Dorsolateral prefrontal cortex (tissue), 120 donors: ENCODE measurements at regions of chr11 and their contacts with region 1.

Region 1: GRCh38 chr11:113896156-113896879 is 8.3 kb upstream of the HTR3B start:
- DNase-seq: peak in 7 of 10 donors; percentile 36 to 67 (median 45)
- H3K4me3 ChIP-seq: no peak overlapping the region
- H3K27ac ChIP-seq: peak overlapping the region in 28 of 59 donors; percentile 3 to 75 (median 46)
- H3K27me3 ChIP-seq: no peaks in the 10 kb centered on the region
- CTCF ChIP-seq: peak; percentile 59 to 90 (median 80)

Region 2: GRCh38 chr11:113234888-113235287 is 661.4 kb before region 1 on chr11:
- intact Hi-C with region 1: no loop called
- DNase-seq: peak in 9 of 10 donors; percentile 45 to 75 (median 61)
- H3K4me3 ChIP-seq: no peak overlapping the region
- H3K27ac ChIP-seq: peak overlapping the region in 58 of 59 donors; percentile 16 to 93 (median 82)
- H3K27me3 ChIP-seq: no peaks in the 10 kb centered on the region
- CTCF ChIP-seq: peak in 1 of 56 donors; percentile 34

Region 3: GRCh38 chr11:113875234-113876073 is 20.9 kb before region 1 on chr11 and contains the start of gene USP28:
- intact Hi-C with region 1: no loop called
- DNase-seq: peak; percentile 96 to 99 (median 98)
- H3K4me3 ChIP-seq: peak within 1 kb of the TSS; percentile 43 to 97 (median 84)
- H3K27ac ChIP-seq: peak within 1 kb of the TSS; percentile 86 to 100 (median 96)
- H3K27me3 ChIP-seq: no peaks in the 10 kb centered on the region
- CTCF ChIP-seq: peak in 22 of 56 donors; percentile 3 to 44 (median 16)
- total RNA-seq, gene USP28: 20.2 to 57.1 (median 38.9) TPM

Region 4: DNA sequence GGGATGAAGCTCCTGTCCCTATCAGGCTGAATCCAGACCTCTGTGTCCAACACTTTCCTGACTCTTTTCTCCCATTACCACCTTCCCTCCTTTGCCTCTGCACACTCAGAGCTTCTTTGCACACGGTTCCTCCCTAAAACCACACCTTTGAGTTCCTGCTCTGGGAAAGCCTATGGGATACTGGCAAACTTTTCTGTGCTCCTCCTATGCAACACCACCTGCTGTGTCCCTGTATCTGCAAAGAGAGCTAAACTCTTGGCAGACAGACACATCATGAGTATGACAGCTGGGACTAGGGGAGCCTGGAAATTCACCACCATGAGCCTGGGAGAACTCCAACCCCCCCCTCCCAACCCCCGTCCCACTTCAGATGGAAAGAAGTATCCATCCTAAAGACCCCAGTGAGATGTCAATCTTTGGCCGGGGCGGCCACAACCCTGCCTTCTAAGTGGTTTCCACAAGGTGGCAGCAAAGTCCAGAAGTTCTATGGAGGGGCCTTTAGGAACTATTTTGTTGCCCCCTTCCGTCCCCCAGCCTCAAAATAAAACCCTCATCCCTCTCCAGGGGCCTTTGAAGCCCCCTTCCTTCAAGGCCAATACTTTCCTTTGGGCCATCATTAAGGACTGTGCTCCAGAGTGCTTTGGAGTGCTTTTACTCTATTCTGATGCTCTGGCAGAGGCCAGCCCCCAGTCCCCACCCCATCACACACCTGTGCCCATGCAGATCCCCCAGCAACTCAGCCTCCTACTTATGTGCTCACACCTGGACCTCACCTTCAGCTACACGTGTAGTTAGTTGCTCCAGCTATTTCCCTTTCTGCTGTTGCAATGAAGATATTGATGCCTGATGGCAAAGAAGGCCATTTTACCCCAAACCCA is 98.0 kb after region 1 on chr11:
- intact Hi-C with region 1: loop called in 1 of 2 experiments (anchors 5 kb)
- DNase-seq: peak in 1 of 10 donors; percentile 32
- H3K4me3 ChIP-seq: no peak overlapping the region
- H3K27ac ChIP-seq: no peak overlapping the region
- H3K27me3 ChIP-seq: peaks cover 0 to 10% (median 0%) of the 10 kb centered on the region in 45 donors
- CTCF ChIP-seq: peak; percentile 24 to 83 (median 72)